ENCODE measurements at regions of chr16 and their contacts with region 1.

Region 1: DNA sequence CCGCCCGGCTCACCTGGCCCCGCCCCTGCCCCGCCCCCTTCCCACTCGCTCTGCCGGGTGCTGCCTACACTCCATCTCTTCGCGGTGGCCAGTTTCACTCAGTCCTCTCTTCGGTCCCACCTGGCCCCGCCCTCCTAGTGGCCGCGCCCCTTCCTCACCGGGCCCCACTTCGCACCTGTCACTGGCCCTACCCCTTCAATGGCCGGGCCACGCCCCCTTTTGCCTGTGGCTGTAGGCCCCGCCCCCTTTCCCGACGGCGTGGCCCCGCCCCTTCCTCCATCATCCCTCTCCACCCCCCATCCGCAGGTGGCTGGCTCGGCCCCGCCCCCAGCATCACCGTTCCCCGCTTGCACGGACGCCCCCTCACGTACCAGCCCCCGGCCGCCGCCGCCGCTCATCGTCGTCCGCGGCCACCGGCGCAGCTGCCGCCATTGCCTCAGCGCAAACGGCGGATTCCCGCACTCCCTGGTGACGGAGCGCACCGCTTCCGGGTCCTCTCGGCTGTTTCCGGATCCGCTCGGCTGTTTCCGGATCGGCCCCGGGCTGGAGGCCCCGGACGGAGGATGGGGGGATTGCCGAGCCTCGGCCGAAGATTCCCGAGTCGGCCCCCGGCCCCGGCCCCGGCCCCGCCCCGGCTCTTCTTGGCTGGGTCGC is at the start of gene RABEP2:
- DNase-seq: peak; percentile 92
- H3K4me3 Mint-ChIP-seq: peak within 1 kb of the TSS; percentile 97
- H3K27ac Mint-ChIP-seq: peak within 1 kb of the TSS; percentile 99
- H3K4me1 Mint-ChIP-seq: peaks cover 18% of the 10 kb centered on the region
- H3K27me3 Mint-ChIP-seq: no peaks in the 10 kb centered on the region
- total RNA-seq, gene RABEP2: 18.3 and 21.1 TPM in 2 replicates

Region 2: DNA sequence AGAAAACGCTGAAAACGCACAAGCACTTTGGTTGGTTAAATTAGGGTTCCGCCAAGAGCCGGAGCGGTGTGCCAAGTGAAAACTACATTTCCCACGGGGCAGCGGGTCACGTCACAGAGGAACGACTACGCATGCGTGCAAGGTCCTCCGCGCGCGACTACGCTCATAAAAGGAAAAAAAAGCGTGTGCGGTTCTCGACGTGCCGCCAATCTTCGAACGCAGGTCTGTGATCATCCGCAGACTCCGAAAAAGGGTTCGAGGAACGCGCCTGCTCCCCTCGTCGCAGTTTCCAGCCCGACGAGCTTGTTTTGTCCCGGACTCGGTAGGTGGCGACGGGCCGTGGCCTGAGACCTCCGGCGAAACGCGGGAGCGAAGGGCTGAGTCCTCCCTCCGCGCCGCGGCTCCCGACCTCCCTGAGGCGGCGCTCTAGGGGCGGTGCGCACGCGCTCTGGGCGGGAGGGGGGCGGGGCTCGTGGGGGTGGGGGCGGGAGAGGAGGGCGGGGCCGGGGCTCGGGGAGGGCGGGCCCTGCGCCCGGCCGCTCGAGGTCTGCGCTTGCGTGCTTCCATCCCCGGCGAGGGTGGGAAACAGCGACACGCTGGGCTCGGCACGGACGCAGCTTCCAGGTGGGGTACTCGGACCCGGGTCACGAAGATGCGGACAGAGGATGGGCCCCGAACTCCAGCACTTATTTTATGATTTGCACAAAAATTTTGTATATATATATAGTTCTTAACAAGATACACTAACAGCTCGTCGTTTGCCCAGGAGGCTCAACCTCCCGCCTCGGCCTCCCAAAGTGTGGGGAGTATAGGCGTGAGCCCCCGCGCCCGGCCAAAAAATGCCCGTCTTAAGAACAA is 370.9 kb before region 1 on chr16 and contains the start of gene SGF29:
- intact Hi-C with region 1: loop called (anchors 10 kb)
- DNase-seq: peak; percentile 90
- H3K4me3 Mint-ChIP-seq: peak within 1 kb of the TSS; percentile 92
- H3K27ac Mint-ChIP-seq: peak within 1 kb of the TSS; percentile 95
- H3K4me1 Mint-ChIP-seq: peaks cover 31% of the 10 kb centered on the region
- H3K27me3 Mint-ChIP-seq: peaks cover 2% of the 10 kb centered on the region
- total RNA-seq, gene SGF29: 38.6 and 39.0 TPM in 2 replicates

Region 3: DNA sequence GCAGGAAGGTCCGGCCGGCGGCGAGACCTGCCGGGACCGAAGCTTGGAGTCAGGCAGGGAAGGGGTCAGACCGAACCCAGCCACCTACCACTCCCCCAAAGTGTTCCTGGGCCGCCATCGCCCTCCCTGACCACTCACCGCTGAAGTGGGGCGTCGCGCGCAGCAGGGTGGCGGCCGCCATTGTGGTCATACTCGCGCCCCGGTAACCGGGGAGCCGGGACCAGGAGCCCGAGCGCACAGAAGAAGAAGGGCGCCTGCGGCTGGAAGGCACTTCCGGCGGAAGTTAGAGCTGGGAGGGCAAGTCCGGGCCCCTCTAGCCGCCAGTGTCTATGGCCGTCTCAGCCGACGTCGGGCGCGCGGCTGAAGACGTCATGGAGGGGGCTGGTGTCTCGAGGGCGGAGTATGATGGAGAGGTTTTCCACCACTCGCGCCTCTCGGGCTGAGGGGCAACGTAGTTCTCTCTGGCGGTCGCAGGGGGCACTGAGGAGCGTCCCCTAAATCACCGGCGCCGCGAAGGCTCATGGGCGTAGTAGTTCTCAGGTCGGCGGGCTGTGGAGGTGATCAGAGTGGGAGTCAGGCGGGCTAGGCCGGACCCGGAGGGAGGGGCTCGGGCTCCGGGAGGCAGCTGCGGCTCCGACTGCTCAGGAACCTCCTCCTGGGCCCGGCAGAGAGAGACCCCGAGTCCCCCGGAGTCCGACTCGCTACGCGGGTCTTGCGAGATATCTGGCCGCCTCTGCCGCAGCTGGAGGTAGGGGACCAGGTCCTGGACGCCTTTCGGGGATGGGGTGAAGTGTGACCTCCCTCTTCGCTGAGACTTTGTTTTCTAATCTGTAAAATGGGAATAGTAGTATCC is 78.6 kb before region 1 on chr16 and contains the start of gene TUFM:
- intact Hi-C with region 1: loop called (anchors 1 kb)
- DNase-seq: peak; percentile 97
- H3K4me3 Mint-ChIP-seq: peak within 1 kb of the TSS; percentile 96
- H3K27ac Mint-ChIP-seq: peak within 1 kb of the TSS; percentile 94
- H3K4me1 Mint-ChIP-seq: peaks cover 12% of the 10 kb centered on the region
- H3K27me3 Mint-ChIP-seq: no peaks in the 10 kb centered on the region
- total RNA-seq, gene TUFM: 261 and 264 TPM in 2 replicates

Region 4: GRCh38 chr16:28879841-28880588 is 44.8 kb before region 1 on chr16:
- intact Hi-C with region 1: loop called (anchors 1 kb)
- DNase-seq: peak; percentile 80
- H3K4me3 Mint-ChIP-seq: peak overlapping the region; percentile 91
- H3K27ac Mint-ChIP-seq: peak overlapping the region; percentile 70
- H3K4me1 Mint-ChIP-seq: peaks cover 18% of the 10 kb centered on the region
- H3K27me3 Mint-ChIP-seq: peaks cover 2% of the 10 kb centered on the region

Region 5: DNA sequence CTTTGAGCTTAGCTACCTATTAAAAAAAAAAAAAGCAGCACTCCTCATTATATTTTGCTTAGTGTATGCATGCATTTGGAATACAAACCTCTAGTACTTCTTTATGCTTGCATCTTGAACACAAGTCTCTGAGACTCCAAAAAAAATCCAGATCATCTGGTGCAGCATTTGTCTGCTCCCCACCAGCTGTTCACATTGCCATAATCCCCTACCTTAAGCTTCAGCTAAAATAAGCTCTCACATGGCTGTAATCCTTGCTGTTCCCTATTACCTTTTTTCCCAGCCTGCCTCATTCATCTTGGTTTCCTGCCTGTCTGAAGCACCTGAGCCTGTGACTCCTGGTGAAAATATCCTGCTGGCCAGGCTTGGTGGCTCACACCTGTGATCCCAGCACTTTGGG is 18.4 kb after region 1 on chr16:
- intact Hi-C with region 1: loop called (anchors 1 kb)
- DNase-seq: no peak
- H3K4me3 Mint-ChIP-seq: no peak overlapping the region
- H3K27ac Mint-ChIP-seq: no peak overlapping the region
- H3K4me1 Mint-ChIP-seq: peaks cover 18% of the 10 kb centered on the region
- H3K27me3 Mint-ChIP-seq: no peaks in the 10 kb centered on the region

Region 6: GRCh38 chr16:28974437-28975157 is 49.7 kb after region 1 on chr16 and contains the start of gene SPNS1:
- intact Hi-C with region 1: loop called (anchors 2 kb)
- DNase-seq: peak; percentile 91
- H3K4me3 Mint-ChIP-seq: peak within 1 kb of the TSS; percentile 95
- H3K27ac Mint-ChIP-seq: peak within 1 kb of the TSS; percentile 92
- H3K4me1 Mint-ChIP-seq: peaks cover 24% of the 10 kb centered on the region
- H3K27me3 Mint-ChIP-seq: no peaks in the 10 kb centered on the region
- total RNA-seq, gene SPNS1: 21.2 and 26.9 TPM in 2 replicates

Measured in activated T-helper 1 cell treated with anti-CD3 and anti-CD28 coated beads, Interleukin-12 subunit alpha, Interleukin-12 subunit beta, Interleukin-2, Interleukin-4 antibody, amounts not matched to agents 30 ng/mL and 10 ng/mL and 1 ng/mL, durations not matched to agents 14 hours and 24 hours and 36 hours (primary cell).